ENCODE measurements at regions of chr6 and their contacts with region 1.

Region 1: GRCh38 chr6:34131326-34132290 is 14.3 kb downstream of the GRM4 start:
- DNase-seq: no peak
- H3K4me3 Mint-ChIP-seq: no peak overlapping the region
- H3K27ac Mint-ChIP-seq: no peak overlapping the region
- H3K4me1 Mint-ChIP-seq: no peaks in the 10 kb centered on the region
- H3K27me3 Mint-ChIP-seq: peaks cover 35% of the 10 kb centered on the region

Region 2: DNA sequence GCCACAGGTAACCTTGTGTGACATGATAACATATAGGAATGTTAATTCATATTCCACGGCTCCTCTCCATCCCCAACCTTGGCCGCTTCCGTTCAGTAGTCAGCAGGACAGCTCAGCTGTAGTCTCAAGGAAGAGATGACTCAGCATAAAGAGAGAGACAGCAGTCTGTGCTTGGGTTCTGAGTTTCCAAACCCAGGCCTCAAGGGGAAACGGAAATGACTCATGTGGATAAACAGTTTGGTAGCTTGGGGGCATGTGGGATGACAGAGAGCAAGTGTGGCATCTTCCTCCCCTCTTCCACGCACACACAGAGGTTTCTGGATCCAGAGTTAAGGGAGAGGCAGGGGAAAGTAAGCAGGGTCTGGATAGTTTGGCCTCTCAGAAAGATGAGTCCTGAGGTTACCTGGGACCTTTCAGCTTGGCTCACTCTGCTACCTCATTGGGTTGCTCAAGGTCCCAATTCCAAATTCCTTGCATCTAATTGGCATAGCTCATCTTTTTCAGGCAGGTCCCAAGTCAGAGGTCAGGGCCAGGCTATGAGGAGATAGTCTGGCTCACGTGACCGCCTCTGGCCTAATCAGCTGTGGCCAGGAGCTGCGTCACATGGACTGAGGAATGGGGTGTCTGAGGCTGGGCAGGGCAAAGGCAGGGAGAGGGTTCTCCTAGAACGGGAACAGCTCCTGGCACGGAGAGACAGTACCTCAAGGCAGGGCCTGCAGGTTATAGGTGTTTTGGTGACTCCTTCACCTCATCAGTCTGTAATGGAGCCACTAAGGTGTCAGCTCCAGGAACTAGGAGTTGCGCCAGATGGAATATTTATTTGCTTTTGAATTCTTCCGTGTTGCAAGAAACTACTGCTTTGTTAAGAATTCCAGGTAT is 291.3 kb before region 1 on chr6:
- CTCF ChIA-PET with region 1: no interaction called
- intact Hi-C with region 1: no loop called
- DNase-seq: peak; percentile 72
- H3K4me3 Mint-ChIP-seq: no peak overlapping the region
- H3K27ac Mint-ChIP-seq: no peak overlapping the region
- H3K4me1 Mint-ChIP-seq: peaks cover 12% of the 10 kb centered on the region
- H3K27me3 Mint-ChIP-seq: no peaks in the 10 kb centered on the region

Region 3: DNA sequence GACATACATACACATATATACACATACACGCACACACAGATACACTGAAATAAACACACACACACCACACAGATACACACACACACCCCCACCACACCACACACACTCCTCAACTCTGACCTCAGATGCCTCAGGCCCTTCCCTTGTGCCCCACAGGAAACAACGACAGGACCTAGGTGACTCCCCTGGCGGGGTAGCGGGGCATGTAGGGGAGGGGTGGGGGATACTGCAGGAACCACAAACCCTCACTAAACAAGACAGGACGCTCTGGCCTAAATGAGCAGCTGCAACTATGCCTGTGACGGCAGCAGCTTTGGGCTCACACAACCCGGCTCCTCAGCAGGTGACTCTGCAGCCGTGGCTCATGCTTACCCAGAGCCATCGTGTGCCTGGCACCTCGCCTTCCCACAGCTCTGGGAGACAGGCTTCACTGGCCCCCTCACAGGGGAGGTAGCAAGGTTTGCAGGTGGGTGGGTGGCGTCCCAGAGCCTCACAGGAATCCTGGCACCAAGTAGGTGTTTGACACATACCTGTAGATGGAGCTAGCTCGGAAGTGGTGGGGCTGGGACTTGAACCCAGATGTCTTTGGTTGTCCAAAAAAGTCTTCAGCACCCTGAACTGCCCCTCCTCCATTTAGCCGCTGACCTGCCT is 86.5 kb before region 1 on chr6:
- CTCF ChIA-PET with region 1: no interaction called
- intact Hi-C with region 1: no loop called
- DNase-seq: peak; percentile 38
- H3K4me3 Mint-ChIP-seq: no peak overlapping the region
- H3K27ac Mint-ChIP-seq: no peak overlapping the region
- H3K4me1 Mint-ChIP-seq: peaks cover 10% of the 10 kb centered on the region
- H3K27me3 Mint-ChIP-seq: no peaks in the 10 kb centered on the region

Region 4: DNA sequence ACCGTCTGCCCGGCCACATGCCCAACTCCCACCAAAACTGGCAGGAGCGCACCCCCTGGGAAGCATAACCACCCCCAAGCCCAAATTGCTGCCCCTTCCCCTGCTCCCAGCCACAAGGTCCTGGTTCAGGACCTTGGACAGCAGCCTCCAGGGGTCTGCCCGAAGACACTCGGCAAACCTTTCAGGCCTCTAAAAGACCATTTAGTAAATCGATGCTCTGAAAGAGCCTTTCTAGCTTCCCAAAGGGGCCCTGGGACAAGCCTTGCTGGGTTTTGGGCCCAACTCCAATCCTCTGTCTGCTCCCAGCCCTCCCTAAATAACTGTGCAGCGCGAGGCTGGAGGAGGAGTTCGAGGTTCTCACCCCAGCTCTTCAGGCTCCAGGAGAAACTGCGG is 16.2 kb before region 1 on chr6:
- CTCF ChIA-PET with region 1: no interaction called
- intact Hi-C with region 1: loop called (anchors 2 kb)
- DNase-seq: peak; percentile 27
- H3K4me3 Mint-ChIP-seq: no peak overlapping the region
- H3K27ac Mint-ChIP-seq: no peak overlapping the region
- H3K4me1 Mint-ChIP-seq: no peaks in the 10 kb centered on the region
- H3K27me3 Mint-ChIP-seq: peaks cover 17% of the 10 kb centered on the region

Region 5: DNA sequence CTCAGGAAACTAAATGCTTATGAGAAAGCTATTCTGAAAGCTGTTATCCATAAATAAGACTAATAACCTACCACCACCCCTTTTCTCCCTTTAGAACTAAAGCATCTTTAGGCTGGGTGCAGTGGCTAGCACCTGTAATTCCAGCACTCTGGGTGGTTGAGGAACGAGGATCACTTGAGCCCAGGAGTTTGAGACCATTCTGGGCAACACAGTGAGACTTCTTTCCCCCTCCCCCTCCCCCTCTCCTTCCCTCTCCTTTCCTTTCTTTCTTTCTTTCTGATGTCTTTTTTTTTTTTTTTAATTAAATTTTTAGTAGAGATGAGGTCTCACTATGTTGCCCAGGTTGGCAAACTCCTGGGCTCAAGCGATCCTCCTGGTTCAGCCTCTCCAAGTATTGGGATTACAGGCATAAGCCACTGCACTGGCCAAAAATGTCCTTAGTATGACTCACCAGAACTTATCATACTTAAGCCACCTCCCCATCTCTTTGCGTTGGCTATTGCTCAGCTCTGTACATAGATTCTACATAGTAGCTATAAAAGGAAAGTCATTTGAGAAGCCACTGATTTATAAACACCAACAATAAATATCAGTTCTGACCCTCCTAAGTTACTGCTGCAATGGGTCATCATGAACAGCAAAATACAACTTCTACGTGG is 479.3 kb after region 1 on chr6:
- CTCF ChIA-PET with region 1: no interaction called
- intact Hi-C with region 1: no loop called
- DNase-seq: no peak
- H3K4me3 Mint-ChIP-seq: no peak overlapping the region
- H3K27ac Mint-ChIP-seq: no peak overlapping the region
- H3K4me1 Mint-ChIP-seq: peaks cover 12% of the 10 kb centered on the region
- H3K27me3 Mint-ChIP-seq: no peaks in the 10 kb centered on the region